Ovary (tissue), 10 donors: ENCODE measurements at regions of chr1 and their contacts with region 1.

Region 1: DNA sequence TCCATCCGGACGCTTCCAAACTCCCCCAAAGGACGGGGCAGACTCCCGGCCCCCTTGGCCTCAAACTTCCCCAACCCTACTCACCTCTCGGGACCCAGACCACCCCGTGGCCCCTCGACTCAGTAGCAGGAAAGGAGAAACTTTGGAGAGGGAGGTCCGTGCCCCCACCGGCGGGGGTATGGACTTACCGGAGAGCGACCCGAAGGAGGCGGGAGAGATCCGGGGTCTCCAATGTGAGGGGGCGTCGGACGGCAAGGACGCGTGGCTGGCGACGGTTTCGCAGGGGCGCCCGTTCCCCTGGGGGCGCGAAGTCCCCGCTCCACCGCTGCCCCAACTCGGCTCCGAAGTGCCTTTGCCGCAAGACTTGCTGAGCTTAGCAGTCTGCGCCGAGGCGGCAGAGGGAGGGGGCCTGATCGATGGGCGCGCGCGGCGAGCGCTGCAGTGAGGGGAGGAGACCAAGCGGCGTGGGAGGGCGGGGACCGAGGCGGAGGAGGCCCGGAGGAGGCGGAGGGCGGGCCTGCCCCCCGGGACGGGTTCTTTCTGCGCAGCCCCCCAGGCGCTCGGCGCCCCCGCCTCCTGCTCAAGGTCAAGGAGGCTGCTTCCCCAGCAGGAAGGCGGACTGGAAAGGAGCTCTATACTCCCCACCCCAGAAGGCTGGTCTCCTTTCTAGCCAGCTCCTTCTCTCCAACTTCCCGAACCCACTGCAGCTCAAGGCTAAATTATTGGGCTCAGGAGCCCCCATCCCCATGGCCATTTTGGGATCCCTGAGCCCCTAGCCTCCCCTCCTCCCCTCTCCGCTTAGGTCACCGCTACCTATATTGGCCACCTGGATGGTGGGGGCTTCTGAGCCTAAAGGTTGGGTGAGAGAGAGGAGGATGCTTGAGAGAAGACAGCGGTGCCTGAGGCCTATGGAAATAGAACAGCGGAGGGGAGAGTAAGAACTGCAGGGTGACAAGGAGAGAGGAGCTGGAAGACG is at the start of gene SYT2:
- DNase-seq: peak; percentile 64 to 87 (median 80)
- H3K4me3 ChIP-seq: peak within 1 kb of the TSS; percentile 29
- H3K27ac ChIP-seq: no peak within 1 kb of the TSS
- H3K4me1 ChIP-seq: no peaks in the 10 kb centered on the region
- H3K27me3 ChIP-seq: no peaks in the 10 kb centered on the region
- CTCF ChIP-seq: no peak
- EP300 ChIP-seq: no peak
- POLR2A ChIP-seq: no peak
- total RNA-seq, gene SYT2: 0.34 to 5.5 (median 0.80) TPM in 6 of 7 donors, not detected in the other

Region 2: DNA sequence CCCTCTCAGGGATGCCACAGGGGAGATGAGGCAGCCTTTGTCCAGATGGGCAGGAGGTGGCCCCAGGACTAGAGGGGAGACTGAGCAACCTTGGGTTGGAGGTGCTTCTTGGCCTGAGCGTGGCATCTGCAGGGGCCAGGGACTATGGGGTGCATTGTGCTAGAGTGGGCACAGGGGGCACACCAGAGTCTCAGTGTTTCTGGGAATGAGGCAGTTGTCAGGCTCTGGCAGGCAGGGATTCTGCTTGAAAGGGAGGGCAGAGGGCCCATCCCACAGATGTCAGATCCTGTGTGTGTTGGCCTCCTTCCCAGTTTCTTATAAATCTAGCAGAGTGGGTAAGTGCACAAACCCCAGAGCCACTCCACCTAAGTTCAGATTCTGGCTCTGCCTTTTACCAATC is 503.1 kb before region 1 on chr1:
- intact Hi-C with region 1: loop called in 1 of 4 experiments (anchors 10 kb)
- DNase-seq: no peak
- H3K4me3 ChIP-seq: no peak overlapping the region
- H3K27ac ChIP-seq: no peak overlapping the region
- H3K4me1 ChIP-seq: no peaks in the 10 kb centered on the region
- H3K27me3 ChIP-seq: no peaks in the 10 kb centered on the region
- CTCF ChIP-seq: no peak
- EP300 ChIP-seq: no peak
- POLR2A ChIP-seq: no peak

Region 3: DNA sequence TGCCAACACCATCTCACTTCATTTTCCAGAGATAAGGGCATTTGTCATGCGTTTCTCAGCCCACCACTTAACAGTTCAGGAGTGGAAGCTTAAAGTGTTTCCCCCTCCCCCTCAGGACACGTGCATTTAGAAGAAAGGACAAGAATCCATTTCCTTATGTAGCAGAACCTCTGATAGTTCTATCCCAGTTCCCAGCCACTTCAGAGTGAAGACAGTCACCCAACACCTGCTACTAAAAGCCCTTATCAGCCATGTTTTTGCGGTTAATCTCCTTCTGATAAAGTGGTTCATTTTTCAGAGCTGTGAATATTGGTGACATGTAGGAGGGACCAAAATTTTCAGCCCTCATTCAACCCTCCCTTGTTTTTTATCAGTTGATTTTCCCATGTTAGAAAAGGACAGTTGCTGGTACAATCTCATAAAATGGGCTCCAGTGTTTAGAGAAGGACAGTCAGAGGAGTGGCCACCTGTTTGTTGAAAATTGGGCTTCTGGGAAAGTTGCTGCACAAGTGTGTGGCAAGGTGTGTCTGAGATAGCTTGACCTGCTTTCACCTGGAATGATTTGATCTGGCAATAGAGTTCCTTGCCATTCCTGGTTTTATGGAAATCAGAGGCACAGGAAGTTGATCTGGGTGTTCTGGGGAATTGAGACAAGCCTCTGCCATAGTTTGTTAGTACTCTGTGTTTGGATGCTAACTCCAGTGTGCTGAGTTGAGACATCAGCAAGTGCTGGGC is 247.8 kb before region 1 on chr1:
- intact Hi-C with region 1: loop called in 2 of 4 experiments (anchors 10 kb)
- DNase-seq: no peak
- H3K4me3 ChIP-seq: no peak overlapping the region
- H3K27ac ChIP-seq: no peak overlapping the region
- H3K4me1 ChIP-seq: no peaks in the 10 kb centered on the region
- H3K27me3 ChIP-seq: no peaks in the 10 kb centered on the region
- CTCF ChIP-seq: no peak
- EP300 ChIP-seq: no peak
- POLR2A ChIP-seq: no peak